ENCODE measurements at regions of chr1 and their contacts with region 1.

Region 1: GRCh38 chr1:3453203-3453761 is 1.2 kb upstream of the ARHGEF16 start:
- DNase-seq: peak in 1 of 2 donors; percentile 82
- H3K4me3 ChIP-seq: no peak overlapping the region
- H3K27ac ChIP-seq: no peak overlapping the region
- H3K4me1 ChIP-seq: peaks cover 7 to 9% of the 10 kb centered on the region in 2 donors
- H3K27me3 ChIP-seq: no peaks in the 10 kb centered on the region
- CTCF ChIP-seq: peak; percentile 93 to 97 (median 94)

Region 2: GRCh38 chr1:3721955-3722465 is 268.7 kb after region 1 on chr1:
- intact Hi-C with region 1: loop called (anchors 5 kb)
- DNase-seq: no peak
- H3K4me3 ChIP-seq: no peak overlapping the region
- H3K27ac ChIP-seq: no peak overlapping the region
- H3K4me1 ChIP-seq: no peaks in the 10 kb centered on the region
- H3K27me3 ChIP-seq: peaks cover 7% of the 10 kb centered on the region
- CTCF ChIP-seq: no peak

Region 3: GRCh38 chr1:3803905-3804626 is 350.8 kb after region 1 on chr1:
- intact Hi-C with region 1: loop called (anchors 2 kb)
- DNase-seq: no peak
- H3K4me3 ChIP-seq: no peak overlapping the region
- H3K27ac ChIP-seq: no peak overlapping the region
- H3K4me1 ChIP-seq: no peaks in the 10 kb centered on the region
- H3K27me3 ChIP-seq: no peaks in the 10 kb centered on the region
- CTCF ChIP-seq: no peak

Region 4: DNA sequence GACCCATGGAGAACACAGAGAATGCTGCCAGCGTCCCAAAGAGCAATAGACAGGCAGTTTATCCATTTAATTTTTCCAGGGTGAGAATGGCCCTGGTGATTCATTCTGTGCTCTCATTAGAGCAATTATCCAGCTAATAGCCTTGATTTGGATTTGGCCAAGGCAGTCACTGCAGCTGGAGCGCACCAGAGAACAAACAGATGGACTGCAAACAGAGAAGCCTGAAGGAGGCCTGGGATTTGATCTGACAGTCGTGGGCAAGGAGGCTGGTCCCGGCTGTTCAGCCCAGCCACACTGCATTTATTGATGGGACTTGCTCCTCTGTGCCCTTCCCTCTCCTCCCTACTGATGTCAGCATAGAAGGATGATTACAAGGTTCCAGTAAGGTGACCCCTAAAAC is 800.7 kb after region 1 on chr1:
- intact Hi-C with region 1: no loop called
- DNase-seq: no peak
- H3K4me3 ChIP-seq: no peak overlapping the region
- H3K27ac ChIP-seq: no peak overlapping the region
- H3K4me1 ChIP-seq: no peaks in the 10 kb centered on the region
- H3K27me3 ChIP-seq: no peaks in the 10 kb centered on the region
- CTCF ChIP-seq: no peak

Measured in ascending aorta (tissue), 2 donors.